MCF 10A (cell line): ENCODE measurements at regions of chr5 and their contacts with region 1.

Region 1: DNA sequence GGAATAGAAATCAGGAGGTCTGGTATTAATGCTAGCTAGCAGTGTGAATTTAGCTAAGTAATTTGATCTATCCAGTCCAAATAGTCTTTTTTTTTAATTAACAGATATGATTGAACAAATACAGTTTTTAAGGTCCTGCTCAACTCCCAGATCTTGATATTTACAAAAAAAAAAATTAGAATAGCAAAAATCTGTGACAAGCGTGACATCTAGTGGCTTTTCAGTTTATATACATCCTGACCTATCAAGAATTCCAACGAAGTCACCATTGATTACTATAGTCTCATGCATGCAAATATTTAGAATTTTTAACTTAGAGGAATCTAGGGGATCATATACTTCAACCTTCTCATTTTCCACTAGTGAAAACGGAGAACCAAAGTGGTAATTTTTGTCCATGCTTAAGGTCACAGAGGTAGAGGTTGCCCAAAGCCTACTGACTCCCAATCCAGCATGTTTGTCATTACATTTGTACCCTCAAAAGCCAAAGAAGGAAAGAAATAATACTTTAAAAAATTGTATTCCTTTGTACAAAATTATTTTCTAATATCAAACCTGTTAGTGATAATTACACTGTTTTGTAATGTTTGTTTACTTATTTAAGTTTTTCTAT is 17.6 kb upstream of the TARS1 start:
- DNase-seq: peak; percentile 49
- H3K4me3 Mint-ChIP-seq: no peak overlapping the region
- H3K27ac Mint-ChIP-seq: no peak overlapping the region
- H3K4me1 Mint-ChIP-seq: no peaks in the 10 kb centered on the region
- H3K27me3 Mint-ChIP-seq: no peaks in the 10 kb centered on the region
- CTCF ChIP-seq: peak; percentile 62

Region 2: GRCh38 chr5:32613050-32613672 is 810.0 kb before region 1 on chr5:
- CTCF ChIA-PET with region 1: interaction called, 6 read pairs
- POLR2A ChIA-PET with region 1: no interaction called
- intact Hi-C with region 1: loop called (anchors 10 kb)
- DNase-seq: peak; percentile 84
- H3K4me3 Mint-ChIP-seq: no peak overlapping the region
- H3K27ac Mint-ChIP-seq: no peak overlapping the region
- H3K4me1 Mint-ChIP-seq: peaks cover 9% of the 10 kb centered on the region
- H3K27me3 Mint-ChIP-seq: no peaks in the 10 kb centered on the region
- CTCF ChIP-seq: peak; percentile 84

Region 3: DNA sequence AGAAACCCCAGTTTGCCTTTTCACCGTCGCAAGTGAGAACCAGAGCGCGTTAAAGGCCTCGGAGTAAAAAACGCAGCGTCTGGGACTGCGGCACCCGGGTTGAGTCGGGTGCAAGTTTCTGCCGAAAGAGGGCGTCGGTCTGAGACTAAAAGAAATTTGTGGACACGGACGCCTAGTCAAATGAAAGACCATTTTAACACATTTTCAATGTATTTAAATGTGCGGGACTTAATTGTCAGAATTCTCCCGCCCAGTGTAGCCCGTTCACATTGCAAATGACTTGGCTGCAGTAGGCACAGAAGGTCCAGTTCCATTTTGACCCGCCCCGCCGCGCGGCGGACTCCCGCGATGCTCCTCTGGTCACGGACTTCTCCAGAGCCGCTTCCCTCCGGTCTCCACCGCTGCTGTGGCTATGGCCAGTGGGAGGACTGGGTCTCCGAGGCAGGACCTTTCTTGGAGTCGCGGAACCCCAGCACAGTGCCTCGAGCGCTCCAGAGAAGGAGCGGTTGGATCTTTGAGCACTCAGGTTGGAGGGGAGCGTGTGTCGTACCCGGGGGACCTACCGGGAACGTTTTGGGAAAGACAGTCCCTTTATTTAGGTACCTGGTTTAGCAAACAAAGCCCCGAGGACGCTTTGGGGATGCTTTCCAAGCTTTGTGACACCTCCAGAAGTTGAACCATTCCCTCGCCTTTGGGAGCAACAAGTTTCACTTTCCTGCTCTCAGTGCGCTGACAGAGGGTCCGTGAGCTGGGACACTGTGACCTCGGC is 713.2 kb before region 1 on chr5:
- CTCF ChIA-PET with region 1: interaction called, 13 read pairs
- POLR2A ChIA-PET with region 1: no interaction called
- intact Hi-C with region 1: loop called (anchors 2 kb)
- DNase-seq: peak; percentile 79
- H3K4me3 Mint-ChIP-seq: peak overlapping the region; percentile 83
- H3K27ac Mint-ChIP-seq: peak overlapping the region; percentile 25
- H3K4me1 Mint-ChIP-seq: peaks cover 6% of the 10 kb centered on the region
- H3K27me3 Mint-ChIP-seq: no peaks in the 10 kb centered on the region
- CTCF ChIP-seq: peak; percentile 64

Region 4: GRCh38 chr5:32852535-32852934 is 570.6 kb before region 1 on chr5:
- CTCF ChIA-PET with region 1: interaction called, 3 read pairs
- POLR2A ChIA-PET with region 1: no interaction called
- intact Hi-C with region 1: loop called (anchors 5 kb)
- DNase-seq: peak; percentile 76
- H3K4me3 Mint-ChIP-seq: no peak overlapping the region
- H3K27ac Mint-ChIP-seq: no peak overlapping the region
- H3K4me1 Mint-ChIP-seq: no peaks in the 10 kb centered on the region
- H3K27me3 Mint-ChIP-seq: no peaks in the 10 kb centered on the region
- CTCF ChIP-seq: no peak